Breast epithelium (tissue), 4 donors: ENCODE measurements at regions of chr10 and their contacts with region 1.

Region 1: DNA sequence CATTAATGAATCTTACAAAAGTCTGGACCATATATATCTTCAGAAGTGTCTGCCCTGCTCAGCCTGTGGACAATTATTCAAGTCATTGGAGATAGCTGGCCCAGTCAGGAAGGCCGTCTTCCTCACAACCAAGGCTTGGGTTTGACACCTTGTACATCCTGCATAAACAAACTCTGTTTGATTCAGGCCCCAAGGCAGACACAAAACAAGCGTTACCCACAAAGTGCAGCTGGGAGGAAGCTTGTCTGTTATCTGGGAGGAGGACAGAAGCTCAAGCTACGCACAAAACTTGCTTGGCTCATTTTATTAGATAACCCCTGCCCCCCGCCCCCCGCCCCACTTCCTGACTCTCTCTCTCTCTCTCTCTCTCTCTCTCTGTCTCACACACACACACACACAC is 166.9 kb upstream of the WDR11 start:
- DNase-seq: no peak
- H3K4me3 ChIP-seq: no peak overlapping the region
- H3K27ac ChIP-seq: no peak overlapping the region
- H3K4me1 ChIP-seq: no peaks in the 10 kb centered on the region
- H3K27me3 ChIP-seq: no peaks in the 10 kb centered on the region
- CTCF ChIP-seq: no peak
- POLR2A ChIP-seq: no peak

Region 2: GRCh38 chr10:120115959-120116358 is 568.3 kb before region 1 on chr10:
- intact Hi-C with region 1: loop called (anchors 5 kb)
- DNase-seq: no peak
- H3K4me3 ChIP-seq: no peak overlapping the region
- H3K27ac ChIP-seq: no peak overlapping the region
- H3K4me1 ChIP-seq: no peaks in the 10 kb centered on the region
- H3K27me3 ChIP-seq: no peaks in the 10 kb centered on the region
- CTCF ChIP-seq: no peak
- POLR2A ChIP-seq: no peak

Region 3: DNA sequence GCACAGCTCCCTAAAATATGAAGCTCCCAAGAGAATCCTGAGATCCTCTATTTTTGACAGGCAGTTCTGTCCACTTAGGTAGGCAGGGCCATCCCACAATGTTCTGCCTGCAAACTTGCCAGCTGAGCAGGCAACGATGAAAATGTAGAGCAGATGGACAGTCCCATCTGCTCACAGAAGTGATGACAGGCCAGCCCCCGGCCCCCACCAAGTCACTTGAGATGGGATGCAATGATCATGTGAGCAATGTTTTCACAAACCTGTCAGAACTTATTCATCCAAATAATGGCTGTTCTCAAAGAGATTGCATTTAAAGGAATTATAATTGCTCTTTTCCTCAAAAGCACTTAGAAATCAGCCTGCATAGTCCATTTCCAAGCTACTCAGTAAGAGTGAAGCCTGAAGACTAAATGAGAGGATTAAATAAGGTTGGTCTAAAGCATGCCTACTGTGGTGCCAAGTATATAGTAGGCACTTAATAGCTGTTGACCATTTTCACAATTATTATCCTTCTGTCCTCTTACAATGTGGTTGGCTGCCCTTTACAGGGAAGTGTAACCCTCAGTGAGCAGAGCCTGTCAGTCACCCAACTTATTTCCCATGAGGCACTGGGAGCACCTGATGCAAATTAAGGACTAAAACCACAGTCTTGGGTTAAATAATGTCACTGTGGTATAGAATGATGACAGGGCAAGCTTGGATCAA is 612.8 kb after region 1 on chr10:
- intact Hi-C with region 1: no loop called
- DNase-seq: no peak
- H3K4me3 ChIP-seq: no peak overlapping the region
- H3K27ac ChIP-seq: no peak overlapping the region
- H3K4me1 ChIP-seq: no peaks in the 10 kb centered on the region
- H3K27me3 ChIP-seq: peaks cover 0 to 8% of the 10 kb centered on the region in 2 donors
- CTCF ChIP-seq: no peak
- POLR2A ChIP-seq: no peak